IMR-90 (cell line): ENCODE measurements at regions of chr3 and their contacts with region 1.

Region 1: GRCh38 chr3:47715928-47716327 is 65.8 kb downstream of the SMARCC1 start:
- DNase-seq: peak; percentile 81
- ATAC-seq: peak; percentile 35
- H3K4me3 ChIP-seq: no peak overlapping the region
- H3K27ac ChIP-seq: no peak overlapping the region
- H3K4me1 ChIP-seq: no peaks in the 10 kb centered on the region
- H3K27me3 ChIP-seq: no peaks in the 10 kb centered on the region
- CTCF ChIP-seq: no peak
- POLR2A ChIP-seq: no peak
- RAD21 ChIP-seq: no peak

Region 2: DNA sequence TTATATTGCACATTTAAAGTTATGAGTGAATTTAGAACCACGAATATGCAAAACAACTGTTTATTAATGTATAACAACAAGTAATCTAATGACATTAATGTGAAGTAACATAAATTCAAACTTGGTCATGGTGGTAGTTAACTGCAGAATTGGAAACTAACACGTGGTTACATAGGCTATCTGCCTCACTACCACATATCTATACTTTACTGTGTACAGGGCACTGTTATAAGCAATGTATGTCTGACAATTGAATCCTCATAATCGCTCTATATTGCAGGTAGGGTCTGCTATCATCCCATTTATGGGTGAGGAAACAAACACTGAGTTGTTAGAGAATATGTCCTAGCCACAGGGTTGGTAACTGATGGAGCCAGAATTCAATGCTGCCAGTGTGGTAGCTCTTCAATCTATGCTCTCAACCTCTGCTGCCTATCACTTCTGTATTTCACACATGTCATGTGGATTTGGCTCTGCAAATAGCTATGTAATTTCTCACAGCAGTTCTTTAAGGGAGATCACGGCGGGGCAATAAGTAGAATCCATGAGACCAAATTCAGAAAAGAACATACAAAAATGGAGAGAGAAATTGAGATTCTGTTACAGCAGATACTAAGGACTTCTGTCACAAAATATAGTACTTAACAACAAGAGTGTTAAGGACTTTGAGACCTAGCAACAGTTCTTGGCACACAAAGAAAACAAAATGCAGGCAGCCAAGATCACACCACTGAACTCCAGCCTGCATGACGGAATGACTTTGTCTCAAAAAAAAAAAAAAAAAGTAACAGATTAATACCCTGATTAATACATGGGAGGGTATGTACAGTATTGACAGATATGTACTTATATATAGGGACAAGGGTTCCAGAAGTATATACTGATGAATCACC is 37.2 kb before region 1 on chr3:
- CTCF ChIA-PET with region 1: no interaction called
- POLR2A ChIA-PET with region 1: no interaction called
- dilution Hi-C with region 1: no loop called
- in situ Hi-C with region 1: no loop called
- intact Hi-C with region 1: loop called (anchors 5 kb)
- DNase-seq: no peak
- ATAC-seq: no peak
- H3K4me3 ChIP-seq: no peak overlapping the region
- H3K27ac ChIP-seq: no peak overlapping the region
- H3K4me1 ChIP-seq: no peaks in the 10 kb centered on the region; the same call in 1 of the 2 replicates
- H3K27me3 ChIP-seq: no peaks in the 10 kb centered on the region
- CTCF ChIP-seq: no peak
- POLR2A ChIP-seq: no peak
- RAD21 ChIP-seq: no peak

Region 3: GRCh38 chr3:47772788-47773187 is 56.9 kb after region 1 on chr3:
- CTCF ChIA-PET with region 1: no interaction called
- POLR2A ChIA-PET with region 1: no interaction called
- dilution Hi-C with region 1: no loop called
- in situ Hi-C with region 1: no loop called
- intact Hi-C with region 1: loop called (anchors 10 kb)
- DNase-seq: no peak
- ATAC-seq: no peak
- H3K4me3 ChIP-seq: no peak overlapping the region
- H3K27ac ChIP-seq: no peak overlapping the region
- H3K4me1 ChIP-seq: no peaks in the 10 kb centered on the region
- H3K27me3 ChIP-seq: no peaks in the 10 kb centered on the region
- CTCF ChIP-seq: no peak
- POLR2A ChIP-seq: no peak
- RAD21 ChIP-seq: no peak

Region 4: GRCh38 chr3:48268381-48269183 is 552.7 kb after region 1 on chr3:
- CTCF ChIA-PET with region 1: no interaction called
- POLR2A ChIA-PET with region 1: no interaction called
- dilution Hi-C with region 1: no loop called
- in situ Hi-C with region 1: no loop called
- intact Hi-C with region 1: no loop called
- DNase-seq: no peak
- ATAC-seq: no peak
- H3K4me3 ChIP-seq: no peak overlapping the region
- H3K27ac ChIP-seq: no peak overlapping the region
- H3K4me1 ChIP-seq: no peaks in the 10 kb centered on the region
- H3K27me3 ChIP-seq: no peaks in the 10 kb centered on the region
- CTCF ChIP-seq: no peak
- POLR2A ChIP-seq: no peak
- RAD21 ChIP-seq: no peak